ENCODE measurements at regions of chr17 and their contacts with region 1.

Region 1: GRCh38 chr17:58303971-58304725 is 23.4 kb upstream of the MPO start:
- DNase-seq: peak in 1 of 2 donors; percentile 36
- ATAC-seq: peak; percentile 85

Region 2: DNA sequence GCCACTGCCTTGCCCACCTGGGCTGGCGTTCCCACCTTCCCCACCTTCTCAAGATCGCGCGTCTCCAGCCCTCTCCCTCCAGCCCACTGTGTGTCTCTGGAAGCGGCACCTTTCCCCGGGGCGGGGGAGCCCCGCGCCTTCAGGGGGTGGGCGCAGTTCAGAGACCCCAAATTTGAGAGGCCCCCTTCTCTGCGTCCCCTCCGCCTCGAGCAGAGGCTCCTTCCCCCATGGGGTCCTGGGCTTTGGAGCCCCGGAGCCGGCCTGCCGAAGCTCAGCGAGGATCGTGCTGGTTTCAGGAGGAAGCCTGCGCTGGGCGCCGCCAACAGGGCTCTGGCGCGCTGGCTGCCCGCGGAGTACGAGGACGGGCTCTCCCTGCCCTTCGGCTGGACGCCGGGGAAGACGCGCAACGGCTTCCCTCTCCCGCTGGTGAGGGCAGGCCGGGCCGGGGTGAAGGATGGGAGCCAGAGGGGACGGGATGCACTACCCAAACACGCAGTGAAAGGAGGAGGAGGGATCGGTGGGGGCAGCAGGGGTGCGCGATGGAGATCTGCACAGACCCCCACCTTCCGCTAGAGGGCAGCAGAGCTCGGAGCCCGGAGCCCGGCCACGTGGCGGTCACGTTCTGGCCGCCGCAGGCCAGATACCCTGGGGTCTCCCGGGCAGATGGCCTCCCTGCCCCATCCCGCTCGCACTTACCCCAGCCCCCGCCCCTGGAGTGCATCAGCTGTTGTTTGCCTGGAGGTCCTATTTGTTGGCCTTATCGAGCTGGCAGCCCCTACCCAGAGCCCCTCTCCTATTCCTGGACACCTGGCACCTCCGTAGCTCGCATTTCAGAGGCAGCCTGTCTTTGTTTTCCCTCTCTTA is 54.6 kb before region 1 on chr17:
- intact Hi-C with region 1: no loop called
- DNase-seq: peak; percentile 35 to 63
- ATAC-seq: peak; percentile 88

Region 3: GRCh38 chr17:58447039-58447975 is 143.2 kb after region 1 on chr17:
- intact Hi-C with region 1: loop called in 1 of 2 experiments (anchors 10 kb)
- DNase-seq: peak; percentile 62 to 79
- ATAC-seq: peak; percentile 100

Measured in left colon (tissue), 2 donors.